PC-9 (cell line): ENCODE measurements at regions of chr1 and their contacts with region 1.

Region 1: GRCh38 chr1:64136752-64137411 is 66.5 kb upstream of the UBE2U start:
- DNase-seq: peak; percentile 51 to 75
- H3K4me3 ChIP-seq: no peak overlapping the region
- H3K27ac ChIP-seq: no peak overlapping the region
- H3K4me1 ChIP-seq: peaks cover 38% of the 10 kb centered on the region
- H3K27me3 ChIP-seq: no peaks in the 10 kb centered on the region
- CTCF ChIP-seq: peak; percentile 92

Region 2: DNA sequence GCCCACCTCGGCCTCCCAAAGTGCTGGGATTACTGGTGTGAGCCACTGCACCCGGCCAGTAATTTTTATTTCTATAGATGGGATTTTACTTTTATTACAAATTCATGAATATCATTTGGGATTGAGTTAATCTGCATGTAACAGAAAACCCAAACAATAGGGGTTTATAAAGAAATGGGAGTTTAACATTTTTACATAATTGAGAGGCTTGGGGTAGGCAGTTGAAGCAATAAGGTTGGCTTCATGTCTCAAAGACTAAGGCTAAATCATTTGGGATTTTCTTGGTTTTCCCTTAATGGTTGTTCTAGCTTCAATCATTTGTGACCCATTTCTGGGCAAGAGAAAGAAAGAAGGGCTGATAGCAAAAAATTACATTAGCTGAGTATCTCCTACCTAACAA is 933.2 kb before region 1 on chr1:
- CTCF ChIA-PET with region 1: no interaction called
- POLR2A ChIA-PET with region 1: no interaction called
- intact Hi-C with region 1: no loop called
- DNase-seq: no peak
- H3K4me3 ChIP-seq: no peak overlapping the region
- H3K27ac ChIP-seq: no peak overlapping the region
- H3K4me1 ChIP-seq: no peaks in the 10 kb centered on the region
- H3K27me3 ChIP-seq: peaks cover 58% of the 10 kb centered on the region
- CTCF ChIP-seq: no peak

Region 3: DNA sequence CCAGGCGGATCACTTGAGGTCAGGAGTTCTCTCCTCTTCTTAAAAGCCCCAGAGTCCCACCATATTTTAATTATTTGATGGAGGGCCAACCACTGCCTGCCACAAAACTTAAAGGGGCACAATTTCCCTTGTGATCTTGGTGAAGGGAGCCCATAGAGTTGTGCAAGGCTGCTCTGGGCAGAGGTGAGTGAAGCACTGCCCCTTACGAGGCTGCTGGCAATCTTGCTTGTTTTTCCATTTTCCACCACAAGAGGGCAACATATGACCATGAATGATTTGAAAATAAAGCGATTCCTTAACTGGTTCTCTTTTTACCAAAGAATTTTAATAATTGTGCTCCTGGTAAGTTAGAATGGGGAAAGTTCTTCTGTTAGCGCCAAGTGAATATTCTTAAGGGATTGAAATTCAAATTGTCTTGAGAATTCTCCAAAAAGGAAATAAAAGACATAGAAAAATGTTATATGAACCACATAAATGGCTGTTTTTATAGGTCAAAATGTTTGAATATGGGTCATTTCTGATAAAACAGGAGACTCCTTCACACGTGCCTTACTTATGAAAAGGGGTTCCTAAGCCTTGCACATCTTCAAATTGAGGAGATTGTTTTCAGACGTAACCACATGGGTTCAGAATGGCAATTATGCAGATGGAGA is 521.0 kb before region 1 on chr1:
- CTCF ChIA-PET with region 1: interaction called, 6 read pairs
- POLR2A ChIA-PET with region 1: no interaction called
- intact Hi-C with region 1: loop called (anchors 2 kb)
- DNase-seq: peak; percentile 61 to 63
- H3K4me3 ChIP-seq: no peak overlapping the region
- H3K27ac ChIP-seq: no peak overlapping the region
- H3K4me1 ChIP-seq: peaks cover 38% of the 10 kb centered on the region
- H3K27me3 ChIP-seq: no peaks in the 10 kb centered on the region
- CTCF ChIP-seq: peak; percentile 91

Region 4: DNA sequence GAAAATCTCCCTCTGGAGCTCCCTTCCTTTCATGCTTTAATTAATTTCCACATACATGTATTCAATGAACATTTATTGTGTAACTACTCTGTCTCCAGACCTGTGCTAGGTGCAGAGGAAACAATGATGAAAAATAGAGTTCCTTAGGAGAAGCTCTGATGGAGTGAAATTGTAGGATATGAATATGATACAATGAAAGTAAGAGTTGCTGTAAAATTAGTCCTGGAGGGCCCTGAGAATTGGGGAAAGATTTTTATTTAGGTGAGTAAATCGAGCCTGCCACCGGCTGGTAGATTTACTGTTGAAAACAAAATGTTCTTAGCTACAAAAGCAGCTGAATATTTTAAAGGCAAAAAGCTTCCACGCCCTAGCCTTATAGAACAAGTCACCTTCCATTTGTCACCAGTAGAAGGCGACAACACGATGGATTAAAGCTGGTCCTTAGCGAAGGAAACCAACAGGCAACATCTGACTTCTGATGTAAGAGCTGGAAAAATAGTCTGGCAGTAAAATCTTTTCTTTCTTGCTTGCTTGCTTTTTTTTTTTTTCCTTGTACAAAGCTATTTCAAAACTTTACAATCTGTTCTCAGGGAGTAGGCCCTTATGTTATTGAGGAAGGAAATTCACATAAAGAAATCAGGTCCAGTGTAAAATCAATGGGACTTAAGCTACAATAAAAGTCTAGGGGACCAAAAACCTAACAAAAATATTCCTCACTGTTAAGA is 445.0 kb before region 1 on chr1:
- CTCF ChIA-PET with region 1: interaction called, 25 read pairs
- POLR2A ChIA-PET with region 1: no interaction called
- intact Hi-C with region 1: loop called (anchors 1 kb)
- DNase-seq: peak; percentile 62 to 86
- H3K4me3 ChIP-seq: no peak overlapping the region
- H3K27ac ChIP-seq: peak overlapping the region; percentile 61
- H3K4me1 ChIP-seq: peaks cover 11% of the 10 kb centered on the region
- H3K27me3 ChIP-seq: no peaks in the 10 kb centered on the region
- CTCF ChIP-seq: peak; percentile 88

Region 5: DNA sequence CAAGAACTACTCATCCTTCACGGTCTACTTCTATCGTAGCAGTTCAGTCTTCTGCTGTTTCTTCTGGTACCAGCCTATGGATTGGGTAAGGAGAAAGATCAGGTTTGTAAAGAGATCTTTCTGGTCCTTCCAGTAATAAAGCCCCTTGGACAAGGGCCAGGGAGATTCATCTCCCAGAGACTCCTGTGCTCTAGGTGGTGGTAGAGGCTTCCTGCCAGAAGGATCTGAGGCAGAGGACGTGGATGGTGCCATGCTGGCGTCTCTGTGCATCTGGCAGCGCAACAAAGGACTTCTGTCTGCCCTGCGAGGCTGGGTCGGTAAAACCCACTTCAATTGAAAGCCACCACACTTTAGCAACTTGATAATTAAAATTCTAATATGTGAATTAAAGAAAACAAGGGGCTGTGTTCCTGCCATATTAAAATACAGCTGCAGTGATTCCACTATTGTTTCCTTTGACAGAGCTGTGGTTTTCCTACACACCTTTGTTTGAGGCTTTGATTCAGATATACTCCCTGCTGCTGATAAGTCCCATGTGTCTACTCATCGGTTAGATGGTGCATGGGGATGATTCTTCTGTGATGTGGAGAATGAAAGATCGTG is 289.5 kb before region 1 on chr1:
- CTCF ChIA-PET with region 1: interaction called, 16 read pairs
- POLR2A ChIA-PET with region 1: interaction called, 4 read pairs
- intact Hi-C with region 1: loop called (anchors 1 kb)
- DNase-seq: peak; percentile 55 to 80
- H3K4me3 ChIP-seq: no peak overlapping the region
- H3K27ac ChIP-seq: 0 out of 2 replicates have a peak overlapping the region, but pooled peaks have one; percentile 9
- H3K4me1 ChIP-seq: peaks cover 14% of the 10 kb centered on the region
- H3K27me3 ChIP-seq: no peaks in the 10 kb centered on the region
- CTCF ChIP-seq: no peak

Region 6: DNA sequence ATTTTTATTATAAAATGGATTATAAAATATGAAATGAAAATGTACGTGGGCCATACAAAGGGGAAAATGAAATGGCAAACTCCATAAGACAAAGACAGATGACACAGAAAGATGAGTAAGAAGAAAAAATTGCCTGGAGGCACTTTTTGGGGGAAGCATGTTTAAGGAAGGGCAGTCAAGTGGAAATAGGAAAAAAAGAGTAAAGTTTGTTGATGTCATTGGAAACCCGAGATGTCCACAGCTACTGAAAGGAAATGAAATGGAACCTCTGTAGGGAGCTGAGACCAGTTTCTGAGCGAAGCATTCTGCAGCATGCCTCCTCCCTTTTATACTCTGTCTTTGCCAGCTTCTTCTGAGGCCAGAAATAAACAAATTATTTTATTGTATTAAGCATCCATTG is 136.9 kb before region 1 on chr1:
- CTCF ChIA-PET with region 1: interaction called, 4 read pairs
- POLR2A ChIA-PET with region 1: no interaction called
- intact Hi-C with region 1: loop called (anchors 2 kb)
- DNase-seq: peak; percentile 35 to 81
- H3K4me3 ChIP-seq: no peak overlapping the region
- H3K27ac ChIP-seq: peak overlapping the region; percentile 65
- H3K4me1 ChIP-seq: peaks cover 31% of the 10 kb centered on the region
- H3K27me3 ChIP-seq: no peaks in the 10 kb centered on the region
- CTCF ChIP-seq: no peak

Region 7: DNA sequence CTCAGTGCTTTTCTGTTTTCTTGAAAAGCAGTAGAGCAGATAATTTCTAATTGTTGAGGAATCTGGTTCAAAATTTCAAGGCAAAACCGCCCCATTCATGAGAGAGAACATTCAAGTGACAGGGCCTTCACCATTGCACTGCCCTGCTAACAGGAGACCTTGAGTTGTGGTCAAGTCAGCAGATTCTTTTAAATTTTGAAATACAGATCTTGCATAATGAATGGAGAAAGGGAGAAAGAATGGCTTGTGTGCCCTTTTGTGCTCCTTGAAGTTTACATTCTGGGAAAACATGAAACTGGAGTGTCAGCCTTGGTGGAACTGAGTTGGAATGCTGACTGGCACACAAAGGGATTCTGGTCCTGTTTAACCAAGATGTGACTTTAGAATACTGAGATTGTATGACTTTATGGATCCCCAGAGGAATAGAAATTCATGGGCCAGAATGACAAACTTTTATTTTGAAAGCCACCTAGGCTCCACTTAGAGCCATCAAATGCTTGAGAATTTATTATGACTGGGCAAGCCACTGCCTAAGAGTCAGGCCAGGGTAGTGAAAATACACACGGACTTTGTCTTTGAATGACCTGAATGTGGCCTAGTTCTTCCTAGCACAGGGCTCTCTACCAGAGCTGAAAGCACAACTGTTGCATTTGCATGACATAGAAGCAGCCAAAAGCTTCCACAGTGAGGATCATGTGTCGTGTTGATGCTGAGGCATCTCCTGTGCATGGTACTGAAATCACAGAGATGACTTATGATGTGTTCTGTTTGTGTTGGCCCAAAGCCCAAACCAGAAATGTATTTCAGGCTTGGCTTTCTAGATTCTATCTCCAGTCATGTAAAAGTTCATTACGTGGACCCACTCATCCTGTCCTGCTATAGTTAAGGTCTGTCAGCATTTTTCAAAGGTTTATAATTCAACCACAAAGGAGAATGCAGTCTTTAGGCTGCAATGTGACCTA is 97.6 kb before region 1 on chr1:
- CTCF ChIA-PET with region 1: no interaction called
- POLR2A ChIA-PET with region 1: no interaction called
- intact Hi-C with region 1: loop called (anchors 1 kb)
- DNase-seq: peak; percentile 76 to 94
- H3K4me3 ChIP-seq: no peak overlapping the region
- H3K27ac ChIP-seq: peak overlapping the region; percentile 60
- H3K4me1 ChIP-seq: peaks cover 58% of the 10 kb centered on the region
- H3K27me3 ChIP-seq: no peaks in the 10 kb centered on the region
- CTCF ChIP-seq: no peak

Region 8: GRCh38 chr1:64242895-64243756 is 106.2 kb after region 1 on chr1:
- CTCF ChIA-PET with region 1: interaction called, 5 read pairs
- POLR2A ChIA-PET with region 1: no interaction called
- intact Hi-C with region 1: loop called (anchors 1 kb)
- DNase-seq: no peak
- H3K4me3 ChIP-seq: no peak overlapping the region
- H3K27ac ChIP-seq: no peak overlapping the region
- H3K4me1 ChIP-seq: peaks cover 15% of the 10 kb centered on the region
- H3K27me3 ChIP-seq: no peaks in the 10 kb centered on the region
- CTCF ChIP-seq: peak; percentile 85

Region 9: DNA sequence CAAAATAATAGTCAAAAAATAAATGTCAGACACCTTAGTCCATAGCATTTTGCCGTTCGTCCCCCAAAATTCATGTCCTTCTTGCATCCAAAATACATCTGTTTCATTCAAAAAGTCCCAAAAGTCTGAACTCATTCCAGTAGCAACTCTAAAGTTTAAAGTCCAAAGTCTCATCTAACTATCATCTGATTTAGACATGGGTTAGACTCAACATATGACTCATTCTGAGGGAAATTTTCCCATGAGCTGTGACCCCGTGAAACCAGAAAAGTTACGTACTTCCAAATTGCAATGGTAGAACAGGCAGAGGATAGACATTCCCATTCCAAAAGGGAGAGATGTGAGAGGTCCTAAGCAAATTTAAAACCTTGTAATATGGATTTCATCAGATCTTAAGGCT is 284.5 kb after region 1 on chr1:
- CTCF ChIA-PET with region 1: no interaction called
- POLR2A ChIA-PET with region 1: no interaction called
- intact Hi-C with region 1: no loop called
- DNase-seq: no peak
- H3K4me3 ChIP-seq: no peak overlapping the region
- H3K27ac ChIP-seq: no peak overlapping the region
- H3K4me1 ChIP-seq: no peaks in the 10 kb centered on the region
- H3K27me3 ChIP-seq: no peaks in the 10 kb centered on the region
- CTCF ChIP-seq: no peak